ENCODE measurements at regions of chr3 and their contacts with region 1.

Region 1: GRCh38 chr3:172750368-172751174 is at the start of gene ECT2:
- DNase-seq: peak; percentile 100
- H3K4me3 Mint-ChIP-seq: peak within 1 kb of the TSS; percentile 78
- H3K27ac Mint-ChIP-seq: peak within 1 kb of the TSS; percentile 89
- H3K4me1 Mint-ChIP-seq: peaks cover 49% of the 10 kb centered on the region
- H3K27me3 Mint-ChIP-seq: no peaks in the 10 kb centered on the region
- CTCF ChIP-seq: peak; percentile 59
- total RNA-seq, gene ECT2: 54.8 and 63.9 TPM in 2 replicates

Region 2: DNA sequence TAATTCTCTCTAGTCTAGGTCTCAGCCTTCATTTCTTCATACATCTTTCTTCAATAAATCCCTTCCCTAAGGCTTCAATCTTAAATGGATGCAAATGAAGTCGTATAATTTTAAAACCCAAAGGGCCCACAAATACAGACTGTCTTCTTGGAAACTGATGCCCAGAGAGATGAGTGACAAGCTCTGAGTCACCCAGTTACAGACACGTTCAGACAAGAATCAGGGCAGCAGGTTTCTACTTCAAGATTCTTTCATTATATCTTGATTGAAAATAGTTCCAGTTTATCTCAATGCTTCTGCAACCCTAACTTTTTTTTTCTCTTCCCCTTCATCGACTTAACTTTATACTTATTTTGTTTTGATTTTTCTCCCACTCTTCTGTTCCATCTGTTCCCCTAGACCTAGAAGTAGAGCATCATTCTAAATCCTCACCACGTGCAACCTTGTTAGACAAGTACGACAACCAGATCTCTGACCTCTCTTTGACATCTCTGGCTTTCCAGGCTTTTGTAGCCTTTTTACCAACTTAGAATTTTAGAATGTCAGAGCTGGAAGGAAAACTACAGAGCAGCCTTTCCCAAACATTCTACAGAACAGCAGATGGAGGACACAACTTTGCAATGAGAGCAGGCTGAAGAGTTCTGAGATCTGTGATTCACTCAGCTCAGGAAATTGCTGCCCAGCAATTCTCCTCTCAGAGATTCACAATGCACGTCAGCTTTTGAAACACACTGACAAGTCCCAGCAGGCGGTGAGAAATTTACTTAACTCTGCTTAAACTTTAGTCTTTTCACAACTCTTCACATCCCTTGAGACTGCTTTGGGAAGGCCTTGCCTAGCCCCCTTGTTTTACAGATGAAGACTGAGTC is 65.0 kb before region 1 on chr3:
- CTCF ChIA-PET with region 1: interaction called, 6 read pairs
- POLR2A ChIA-PET with region 1: interaction called, 36 read pairs
- intact Hi-C with region 1: no loop called
- DNase-seq: peak; percentile 85
- H3K4me3 Mint-ChIP-seq: peak overlapping the region; percentile 51
- H3K27ac Mint-ChIP-seq: peak overlapping the region; percentile 74
- H3K4me1 Mint-ChIP-seq: peaks cover 38% of the 10 kb centered on the region
- H3K27me3 Mint-ChIP-seq: no peaks in the 10 kb centered on the region
- CTCF ChIP-seq: no peak

Region 3: GRCh38 chr3:172717493-172718088 is 33.0 kb before region 1 on chr3:
- CTCF ChIA-PET with region 1: interaction called, 71 read pairs
- POLR2A ChIA-PET with region 1: interaction called, 16 read pairs
- intact Hi-C with region 1: no loop called
- DNase-seq: peak; percentile 35
- H3K4me3 Mint-ChIP-seq: no peak overlapping the region
- H3K27ac Mint-ChIP-seq: no peak overlapping the region
- H3K4me1 Mint-ChIP-seq: no peaks in the 10 kb centered on the region
- H3K27me3 Mint-ChIP-seq: no peaks in the 10 kb centered on the region
- CTCF ChIP-seq: peak; percentile 28

Region 4: GRCh38 chr3:173639098-173639497 is 888.5 kb after region 1 on chr3:
- CTCF ChIA-PET with region 1: no interaction called
- POLR2A ChIA-PET with region 1: no interaction called
- intact Hi-C with region 1: no loop called
- DNase-seq: no peak
- H3K4me3 Mint-ChIP-seq: no peak overlapping the region
- H3K27ac Mint-ChIP-seq: no peak overlapping the region
- H3K4me1 Mint-ChIP-seq: no peaks in the 10 kb centered on the region
- H3K27me3 Mint-ChIP-seq: peaks cover 74% of the 10 kb centered on the region
- CTCF ChIP-seq: no peak